ENCODE measurements at regions of chrX and their contacts with region 1.

Region 1: GRCh38 chrX:103845165-103845653 is 13.2 kb upstream of the RAB9B start:
- DNase-seq: peak; percentile 12 to 38 (median 30)
- H3K4me3 ChIP-seq: no peak overlapping the region
- H3K4me3 Mint-ChIP-seq: no peak overlapping the region
- H3K27ac ChIP-seq: no peak overlapping the region
- H3K27ac Mint-ChIP-seq: no peak overlapping the region
- H3K4me1 ChIP-seq: no peaks in the 10 kb centered on the region
- H3K4me1 Mint-ChIP-seq: no peaks in the 10 kb centered on the region
- H3K27me3 ChIP-seq: no peaks in the 10 kb centered on the region
- H3K27me3 Mint-ChIP-seq: peaks cover 2 to 3% of the 10 kb centered on the region in 2 donors

Region 2: GRCh38 chrX:103831803-103832544 is 13.2 kb before region 1 on chrX and contains the start of gene RAB9B:
- CTCF ChIA-PET with region 1: interaction called, 15 read pairs
- POLR2A ChIA-PET with region 1: no interaction called
- intact Hi-C with region 1: no loop called
- DNase-seq: peak in 3 of 5 donors; percentile 47 to 57 (median 48)
- H3K4me3 ChIP-seq: peak within 1 kb of the TSS; percentile 29 to 47
- H3K4me3 Mint-ChIP-seq: peak within 1 kb of the TSS; percentile 83 to 95 (median 88)
- H3K27ac ChIP-seq: no peak within 1 kb of the TSS
- H3K27ac Mint-ChIP-seq: peak within 1 kb of the TSS in 3 of 7 donors; percentile 63 to 86 (median 84)
- H3K4me1 ChIP-seq: peaks cover 5% of the 10 kb centered on the region
- H3K4me1 Mint-ChIP-seq: peaks cover 0 to 5% (median 2%) of the 10 kb centered on the region in 4 donors
- H3K27me3 ChIP-seq: no peaks in the 10 kb centered on the region
- H3K27me3 Mint-ChIP-seq: peaks cover 3 to 6% of the 10 kb centered on the region in 2 donors
- total RNA-seq, gene RAB9B: 0.25 to 0.26 TPM

Region 3: GRCh38 chrX:103941201-103941975 is 96.2 kb after region 1 on chrX:
- CTCF ChIA-PET with region 1: interaction called, 37 read pairs
- POLR2A ChIA-PET with region 1: no interaction called
- intact Hi-C with region 1: loop called (anchors 1 kb)
- DNase-seq: peak in 3 of 5 donors; percentile 12 to 22 (median 14)
- H3K4me3 ChIP-seq: no peak overlapping the region
- H3K4me3 Mint-ChIP-seq: no peak overlapping the region
- H3K27ac ChIP-seq: no peak overlapping the region
- H3K27ac Mint-ChIP-seq: peak overlapping the region in 1 of 7 donors; percentile 8
- H3K4me1 ChIP-seq: no peaks in the 10 kb centered on the region
- H3K4me1 Mint-ChIP-seq: peaks cover 9 to 26% (median 13%) of the 10 kb centered on the region in 4 donors
- H3K27me3 ChIP-seq: no peaks in the 10 kb centered on the region
- H3K27me3 Mint-ChIP-seq: no peaks in the 10 kb centered on the region

Region 4: DNA sequence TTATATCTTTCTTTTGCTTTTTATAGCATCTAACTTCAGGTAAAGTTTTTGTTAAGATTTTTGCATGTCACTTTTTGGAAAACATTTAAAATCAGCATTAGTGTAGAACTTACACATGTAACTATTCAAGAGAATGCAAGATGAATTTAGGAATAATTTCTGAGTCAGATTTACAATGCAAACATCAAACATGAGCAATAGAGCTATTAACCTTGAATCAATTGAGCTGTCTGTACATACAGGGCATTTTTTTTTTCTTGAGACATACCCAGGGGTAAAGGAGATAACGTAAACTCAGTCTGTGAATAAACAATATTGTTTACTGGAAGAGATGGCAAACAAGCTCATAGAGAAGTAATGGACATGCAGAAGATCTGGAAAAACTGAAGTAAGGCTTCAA is 1032.3 kb after region 1 on chrX:
- CTCF ChIA-PET with region 1: no interaction called
- POLR2A ChIA-PET with region 1: no interaction called
- intact Hi-C with region 1: no loop called
- DNase-seq: no peak
- H3K4me3 ChIP-seq: no peak overlapping the region
- H3K4me3 Mint-ChIP-seq: no peak overlapping the region
- H3K27ac ChIP-seq: no peak overlapping the region
- H3K27ac Mint-ChIP-seq: no peak overlapping the region
- H3K4me1 ChIP-seq: no peaks in the 10 kb centered on the region
- H3K4me1 Mint-ChIP-seq: no peaks in the 10 kb centered on the region
- H3K27me3 ChIP-seq: no peaks in the 10 kb centered on the region
- H3K27me3 Mint-ChIP-seq: no peaks in the 10 kb centered on the region

Measured in CD4-positive, alpha-beta memory T cell (primary cell).